ENCODE measurements at regions of chr12 and their contacts with region 1.

Region 1: DNA sequence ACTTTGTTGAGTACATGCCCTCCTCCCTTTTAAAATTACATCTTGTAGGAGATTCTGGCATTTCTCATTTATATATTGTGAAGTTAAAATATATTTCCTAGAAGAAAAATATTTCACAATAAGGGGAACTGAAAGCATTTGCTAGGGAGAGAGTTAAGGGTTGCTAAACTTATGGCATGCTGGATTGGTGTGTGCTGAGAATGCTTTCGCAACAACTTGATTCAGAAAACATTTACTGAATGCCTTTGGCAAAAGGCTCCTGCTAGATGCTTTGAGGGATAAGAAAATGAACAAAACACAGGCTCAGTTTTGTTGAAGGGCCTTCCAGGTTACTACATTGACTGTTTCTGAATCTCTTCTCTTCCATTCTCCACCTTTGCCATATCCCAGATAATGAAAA is 67.5 kb downstream of the DIP2B start:
- DNase-seq: no peak
- ATAC-seq: peak; percentile 75

Region 2: DNA sequence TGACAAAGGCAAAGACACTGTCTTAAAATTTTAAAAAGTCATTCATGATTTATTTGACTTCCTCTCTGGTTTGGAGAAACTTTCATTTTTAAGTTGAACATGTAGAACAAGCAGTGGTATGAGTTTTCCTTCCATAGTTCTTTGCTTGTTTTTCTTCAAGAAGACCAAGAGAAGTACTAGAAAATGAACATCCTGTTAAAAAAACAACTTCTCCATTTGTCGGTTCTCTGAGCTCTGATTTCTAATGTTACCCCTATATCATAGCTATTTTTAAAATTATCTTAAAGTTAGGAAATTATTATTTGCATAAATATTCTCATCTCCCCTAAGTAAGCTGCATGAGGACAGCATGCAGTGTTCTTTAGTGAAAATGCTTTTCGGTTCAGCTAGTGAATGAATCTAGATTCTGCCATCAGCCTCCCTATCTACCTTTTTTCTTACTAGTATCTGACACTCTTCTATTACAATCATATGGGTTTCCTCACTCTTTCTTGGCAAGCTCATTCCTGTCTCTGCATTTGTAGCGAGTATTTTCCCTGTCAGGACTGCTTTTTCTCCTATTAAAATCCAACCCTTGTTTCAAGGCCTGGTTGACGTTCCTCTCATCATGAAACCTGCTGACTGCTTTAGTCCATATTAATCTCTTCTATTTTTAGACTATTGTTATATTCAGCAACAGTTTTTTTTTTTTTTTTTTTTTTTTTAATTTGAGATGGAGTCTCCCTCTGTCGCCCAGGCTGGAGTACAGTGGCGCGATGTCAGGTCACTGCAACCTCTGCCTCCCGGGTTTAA is 51.7 kb before region 1 on chr12:
- intact Hi-C with region 1: loop called (anchors 10 kb)
- DNase-seq: no peak
- ATAC-seq: peak; percentile 36

Region 3: DNA sequence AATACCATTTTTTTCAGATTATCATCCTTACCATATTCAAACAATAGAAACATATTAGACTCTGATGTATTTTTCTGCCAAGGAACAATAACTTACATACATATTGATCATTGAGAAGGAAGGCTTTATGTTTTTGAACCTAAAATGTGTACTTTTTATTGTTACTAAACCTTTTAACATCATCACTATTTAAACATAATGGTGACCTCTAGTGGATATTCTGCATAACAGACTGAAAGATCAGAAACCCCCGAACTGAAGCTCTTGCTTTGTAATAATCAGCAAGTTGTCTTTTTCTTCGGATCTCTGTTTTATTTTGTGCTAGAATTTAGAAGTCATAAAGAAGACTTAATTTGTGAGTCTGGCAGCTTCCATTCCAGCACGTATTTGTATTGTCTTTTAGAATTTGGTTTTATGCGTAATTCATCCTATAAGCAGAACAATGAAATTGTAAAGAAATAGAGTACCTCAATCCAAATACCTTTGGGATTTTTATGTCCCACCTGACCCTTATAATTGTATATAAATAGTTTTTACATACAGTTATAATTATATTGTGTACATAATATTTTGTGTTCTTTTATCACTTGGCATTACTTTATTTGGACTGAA is 65.7 kb after region 1 on chr12:
- intact Hi-C with region 1: loop called (anchors 10 kb)
- DNase-seq: no peak
- ATAC-seq: no peak

Region 4: DNA sequence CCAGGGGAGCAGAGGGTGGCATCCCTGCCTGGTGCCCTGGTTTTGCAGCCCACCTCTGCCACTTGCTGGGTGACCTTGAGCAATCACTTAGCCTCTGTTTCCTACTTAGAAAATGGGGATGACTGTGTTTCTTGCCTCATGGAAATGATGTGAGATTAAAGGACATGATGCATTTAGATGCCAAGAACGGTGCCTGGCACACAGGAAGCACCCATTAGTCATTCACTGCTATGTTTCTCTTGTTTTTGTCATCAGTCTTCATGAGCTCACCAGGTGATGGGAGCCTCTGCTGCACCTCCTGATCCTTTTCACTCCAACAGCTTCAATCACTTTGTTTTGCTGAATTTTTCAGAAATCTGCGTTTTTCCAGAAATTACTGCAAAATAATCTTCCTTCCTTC is 168.0 kb after region 1 on chr12:
- intact Hi-C with region 1: no loop called
- DNase-seq: no peak
- ATAC-seq: no peak